Activated CD8-positive, alpha-beta T cell treated with anti-CD3 and anti-CD28 coated beads, Interleukin-2, amount 10 ng/mL, durations not matched to agents 7 days and 5 days (primary cell): ENCODE measurements at regions of chr3 and their contacts with region 1.

Region 1: DNA sequence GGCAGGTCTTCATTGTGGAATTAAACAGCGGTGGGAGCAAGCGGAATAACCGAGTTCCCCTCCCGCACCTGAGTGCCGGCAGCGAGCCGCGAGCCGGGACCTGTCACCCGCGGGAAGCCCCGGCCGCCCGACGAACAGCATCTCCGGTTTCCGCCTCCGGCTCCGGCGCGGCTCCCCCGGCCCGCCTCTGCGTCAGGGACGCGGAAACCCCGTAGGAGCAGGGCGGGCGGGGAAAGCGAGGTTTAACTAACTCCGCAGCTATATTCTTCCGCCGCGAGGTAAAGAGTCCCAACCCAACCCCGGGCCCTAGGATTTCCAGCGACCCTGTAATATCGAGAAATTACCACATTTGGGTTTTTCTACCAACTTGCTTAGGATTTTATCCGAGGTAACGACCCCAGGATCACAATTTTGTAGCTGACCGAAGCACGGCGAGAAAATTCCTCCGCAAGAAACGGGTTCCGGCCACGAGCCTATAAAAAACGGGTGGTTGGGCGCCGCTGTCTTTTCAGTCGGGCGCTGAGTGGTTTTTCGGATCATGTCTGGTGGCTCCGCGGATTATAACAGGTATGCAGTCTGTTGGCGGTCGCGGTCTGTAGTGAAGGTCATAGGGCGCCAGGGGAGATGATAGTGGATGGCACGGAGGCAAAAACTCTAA is at the start of gene EIF4A2:
- DNase-seq: peak; percentile 93
- ATAC-seq: peak; percentile 76
- H3K4me3 Mint-ChIP-seq: peak within 1 kb of the TSS; percentile 91
- H3K27ac Mint-ChIP-seq: peak within 1 kb of the TSS; percentile 97
- H3K4me1 Mint-ChIP-seq: peaks cover 37% of the 10 kb centered on the region
- H3K27me3 Mint-ChIP-seq: no peaks in the 10 kb centered on the region
- total RNA-seq, gene EIF4A2: 365 to 383 TPM

Region 2: DNA sequence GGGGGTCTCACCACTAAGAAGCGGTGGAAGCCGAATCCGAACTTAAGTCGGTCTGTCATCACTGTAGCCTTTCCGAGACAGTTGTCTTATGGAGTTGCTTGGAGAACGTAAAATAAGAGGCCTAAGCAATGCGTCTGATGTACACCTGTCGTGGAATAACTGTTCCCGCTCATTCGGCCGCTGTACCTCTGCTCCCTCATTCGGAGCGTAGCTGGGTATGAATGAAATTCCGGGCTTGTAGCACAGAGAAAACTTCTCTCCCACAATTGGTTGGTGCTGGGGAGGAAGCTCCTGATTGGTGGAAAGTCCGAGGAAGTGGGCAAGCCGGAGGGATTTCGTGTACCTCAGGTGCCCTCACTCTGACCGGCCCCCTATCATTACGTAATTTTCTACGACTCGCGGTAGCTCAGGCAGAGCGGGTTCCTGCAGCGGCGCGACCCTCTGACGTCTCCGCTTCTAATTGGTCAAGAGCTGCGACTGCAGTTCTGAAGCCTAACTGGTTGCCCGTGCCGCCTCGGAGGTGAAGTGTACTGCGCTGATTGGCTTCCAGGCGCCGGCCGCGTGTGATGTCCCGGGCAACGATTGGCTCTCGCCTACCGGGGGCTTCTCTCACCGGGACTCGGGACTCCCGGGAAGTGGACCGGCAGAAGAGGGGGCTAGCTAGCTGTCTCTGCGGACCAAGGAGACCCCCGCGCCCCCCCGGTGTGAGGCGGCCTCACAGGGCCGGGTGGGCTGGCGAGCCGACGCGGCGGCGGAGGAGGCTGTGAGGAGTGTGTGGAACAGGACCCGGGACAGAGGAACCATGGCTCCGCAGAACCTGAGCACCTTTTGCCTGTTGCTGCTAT is 212.9 kb before region 1 on chr3 and contains the start of gene DNAJB11:
- CTCF ChIA-PET with region 1: interaction called, 4 read pairs
- POLR2A ChIA-PET with region 1: interaction called, 68 read pairs
- DNase-seq: peak; percentile 99
- ATAC-seq: peak; percentile 89
- H3K4me3 Mint-ChIP-seq: peak within 1 kb of the TSS; percentile 97
- H3K27ac Mint-ChIP-seq: peak within 1 kb of the TSS; percentile 99
- H3K4me1 Mint-ChIP-seq: peaks cover 60% of the 10 kb centered on the region
- H3K27me3 Mint-ChIP-seq: no peaks in the 10 kb centered on the region
- total RNA-seq, gene DNAJB11: 55.9 to 56.5 TPM

Region 3: DNA sequence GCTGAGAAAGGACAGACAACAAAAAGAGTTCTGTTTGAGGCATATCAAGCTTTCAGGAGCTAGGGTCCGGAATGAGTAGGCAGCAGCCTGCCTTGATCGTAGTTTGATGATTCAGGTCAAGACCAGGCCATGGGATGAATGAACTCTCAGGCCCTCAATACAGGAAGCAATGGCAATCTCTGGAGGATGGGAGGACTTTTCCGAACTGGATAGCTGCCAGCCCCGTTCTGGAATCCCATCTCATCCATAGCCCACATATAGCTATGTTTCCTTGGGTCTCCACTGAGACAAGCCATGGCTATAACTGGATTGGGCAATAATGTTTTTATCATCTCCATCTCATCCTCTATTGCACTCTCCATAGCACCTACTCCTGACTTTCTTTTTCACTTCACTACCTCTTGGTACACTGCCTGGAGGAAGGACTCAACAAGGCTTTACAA is 157.6 kb before region 1 on chr3:
- CTCF ChIA-PET with region 1: no interaction called
- POLR2A ChIA-PET with region 1: no interaction called
- DNase-seq: no peak
- ATAC-seq: no peak
- H3K4me3 Mint-ChIP-seq: no peak overlapping the region
- H3K27ac Mint-ChIP-seq: no peak overlapping the region
- H3K4me1 Mint-ChIP-seq: no peaks in the 10 kb centered on the region
- H3K27me3 Mint-ChIP-seq: peaks cover 23% of the 10 kb centered on the region

Region 4: GRCh38 chr3:186798239-186798874 is 15.2 kb after region 1 on chr3:
- CTCF ChIA-PET with region 1: interaction called, 4 read pairs
- POLR2A ChIA-PET with region 1: interaction called, 123 read pairs
- DNase-seq: no peak
- ATAC-seq: peak; percentile 47
- H3K4me3 Mint-ChIP-seq: no peak overlapping the region
- H3K27ac Mint-ChIP-seq: peak overlapping the region; percentile 19
- H3K4me1 Mint-ChIP-seq: peaks cover 52% of the 10 kb centered on the region
- H3K27me3 Mint-ChIP-seq: no peaks in the 10 kb centered on the region

Region 5: GRCh38 chr3:186821429-186822367 is 38.5 kb after region 1 on chr3:
- CTCF ChIA-PET with region 1: interaction called, 6 read pairs
- POLR2A ChIA-PET with region 1: interaction called, 54 read pairs
- DNase-seq: peak; percentile 47
- ATAC-seq: no peak
- H3K4me3 Mint-ChIP-seq: no peak overlapping the region
- H3K27ac Mint-ChIP-seq: no peak overlapping the region
- H3K4me1 Mint-ChIP-seq: peaks cover 24% of the 10 kb centered on the region
- H3K27me3 Mint-ChIP-seq: peaks cover 6% of the 10 kb centered on the region

Region 6: GRCh38 chr3:187079090-187080022 is 296.2 kb after region 1 on chr3:
- CTCF ChIA-PET with region 1: no interaction called
- POLR2A ChIA-PET with region 1: no interaction called
- DNase-seq: no peak
- ATAC-seq: no peak
- H3K4me3 Mint-ChIP-seq: no peak overlapping the region
- H3K27ac Mint-ChIP-seq: no peak overlapping the region
- H3K4me1 Mint-ChIP-seq: peaks cover 4% of the 10 kb centered on the region
- H3K27me3 Mint-ChIP-seq: no peaks in the 10 kb centered on the region